ENCODE measurements at regions of chr5 and their contacts with region 1.

Region 1: GRCh38 chr5:132064738-132065331 is 4.4 kb downstream of the IL3 start:
- DNase-seq: peak; percentile 70
- H3K4me3 Mint-ChIP-seq: no peak overlapping the region
- H3K27ac Mint-ChIP-seq: peak overlapping the region; percentile 83
- H3K4me1 Mint-ChIP-seq: peaks cover 83% of the 10 kb centered on the region
- H3K27me3 Mint-ChIP-seq: peaks cover 3% of the 10 kb centered on the region

Region 2: GRCh38 chr5:131796793-131797693 is 267.8 kb before region 1 on chr5 and contains the start of gene FNIP1:
- intact Hi-C with region 1: loop called (anchors 1 kb)
- DNase-seq: peak; percentile 98
- H3K4me3 Mint-ChIP-seq: peak within 1 kb of the TSS; percentile 97
- H3K27ac Mint-ChIP-seq: peak within 1 kb of the TSS; percentile 93
- H3K4me1 Mint-ChIP-seq: peaks cover 21% of the 10 kb centered on the region
- H3K27me3 Mint-ChIP-seq: peaks cover under 1% of the 10 kb centered on the region
- total RNA-seq, gene FNIP1: 18.8 and 19.0 TPM in 2 replicates

Region 3: DNA sequence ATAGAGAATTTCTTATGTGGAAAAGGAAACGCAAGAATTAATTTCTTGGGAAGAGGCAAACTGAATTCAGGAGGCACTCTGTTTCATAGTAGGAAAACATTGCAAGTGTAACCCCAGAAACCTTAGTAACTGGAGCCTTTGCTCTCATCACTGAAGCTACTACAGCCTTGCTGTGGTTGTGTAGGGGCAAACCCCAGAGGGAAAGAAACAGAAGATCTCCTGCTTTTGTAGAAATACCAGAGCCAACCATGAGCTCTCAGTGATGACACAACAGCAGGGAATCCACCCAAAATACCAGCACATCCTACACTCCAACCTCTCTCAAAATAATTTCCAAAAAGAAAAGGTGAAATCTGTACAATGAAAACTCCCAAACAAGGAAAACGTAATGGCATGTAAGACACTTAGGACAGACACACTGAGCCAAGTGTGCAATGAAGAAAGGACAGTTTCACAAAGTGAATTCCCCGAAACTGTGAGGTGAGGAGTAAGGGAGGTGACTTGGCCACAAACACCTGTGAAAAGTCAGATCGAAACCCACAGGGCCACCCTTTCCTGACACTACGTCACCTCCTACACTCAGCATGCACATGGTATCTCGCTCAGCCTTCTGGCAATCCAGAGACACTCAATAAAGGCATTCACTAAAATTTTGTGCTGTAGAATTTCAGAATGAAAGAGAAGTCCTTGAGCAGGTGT is 44.8 kb before region 1 on chr5:
- intact Hi-C with region 1: loop called (anchors 1 kb)
- DNase-seq: peak; percentile 85
- H3K4me3 Mint-ChIP-seq: peak overlapping the region; percentile 50
- H3K27ac Mint-ChIP-seq: peak overlapping the region; percentile 92
- H3K4me1 Mint-ChIP-seq: peaks cover 51% of the 10 kb centered on the region
- H3K27me3 Mint-ChIP-seq: peaks cover 48% of the 10 kb centered on the region

Region 4: GRCh38 chr5:132180134-132180745 is 115.4 kb after region 1 on chr5:
- intact Hi-C with region 1: loop called (anchors 1 kb)
- DNase-seq: no peak
- H3K4me3 Mint-ChIP-seq: no peak overlapping the region
- H3K27ac Mint-ChIP-seq: peak overlapping the region; percentile 25
- H3K4me1 Mint-ChIP-seq: peaks cover 45% of the 10 kb centered on the region
- H3K27me3 Mint-ChIP-seq: no peaks in the 10 kb centered on the region

Region 5: DNA sequence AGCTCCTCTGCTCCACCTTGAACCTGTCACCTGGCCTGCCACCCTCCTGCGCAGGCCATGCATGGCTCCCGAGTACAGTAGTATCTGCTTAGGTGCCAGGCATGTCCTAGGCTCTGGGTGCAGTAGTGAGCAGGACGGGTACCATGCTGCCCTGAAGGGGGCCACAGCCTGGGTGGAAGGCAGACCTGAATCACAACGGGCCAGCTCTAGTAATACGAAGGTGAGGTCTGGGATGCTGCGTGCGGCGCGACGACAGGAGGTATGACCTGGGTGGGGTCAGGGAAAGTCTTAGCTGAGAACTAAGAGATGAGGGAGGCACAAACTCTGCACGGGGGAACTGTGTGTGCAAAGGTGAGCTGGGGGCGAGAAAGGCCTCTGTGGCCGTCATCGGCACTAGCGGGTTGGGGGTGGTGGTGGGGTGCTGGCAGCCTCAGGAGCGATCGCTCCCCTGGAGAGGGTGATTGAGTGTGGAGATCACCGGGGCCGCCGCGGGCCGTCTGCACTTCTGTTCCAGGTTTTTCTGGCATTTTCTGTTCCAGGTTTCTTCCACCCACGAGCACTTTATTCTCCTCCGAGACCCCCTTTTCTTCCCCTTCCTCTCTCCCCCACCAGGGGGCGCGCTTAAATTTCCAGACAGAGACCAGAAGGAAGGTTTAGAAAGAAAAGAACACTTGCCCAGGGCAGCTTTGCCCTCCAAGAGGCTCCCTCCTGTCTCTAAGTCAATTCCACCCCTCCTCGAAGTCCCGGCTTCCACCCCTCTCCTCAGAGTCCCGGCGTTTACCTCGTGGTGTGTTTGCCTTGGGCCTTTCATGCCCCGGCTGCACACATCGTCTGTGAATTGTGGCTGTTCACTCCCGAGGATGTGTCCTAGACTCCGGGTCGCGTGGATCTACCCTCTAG is 207.7 kb after region 1 on chr5:
- intact Hi-C with region 1: loop called (anchors 2 kb)
- DNase-seq: peak; percentile 33
- H3K4me3 Mint-ChIP-seq: no peak overlapping the region
- H3K27ac Mint-ChIP-seq: no peak overlapping the region
- H3K4me1 Mint-ChIP-seq: peaks cover 5% of the 10 kb centered on the region
- H3K27me3 Mint-ChIP-seq: peaks cover 12% of the 10 kb centered on the region

Region 6: GRCh38 chr5:132386644-132387286 is 321.9 kb after region 1 on chr5:
- intact Hi-C with region 1: loop called (anchors 1 kb)
- DNase-seq: peak; percentile 72
- H3K4me3 Mint-ChIP-seq: no peak overlapping the region
- H3K27ac Mint-ChIP-seq: peak overlapping the region; percentile 54
- H3K4me1 Mint-ChIP-seq: peaks cover 61% of the 10 kb centered on the region
- H3K27me3 Mint-ChIP-seq: peaks cover 3% of the 10 kb centered on the region